Cardiac septum (tissue), 1 donor: ENCODE measurements at regions of chr11 and their contacts with region 1.

Region 1: GRCh38 chr11:17063171-17064002 is 14.1 kb downstream of the RPS13 start:
- DNase-seq: no peak

Region 2: DNA sequence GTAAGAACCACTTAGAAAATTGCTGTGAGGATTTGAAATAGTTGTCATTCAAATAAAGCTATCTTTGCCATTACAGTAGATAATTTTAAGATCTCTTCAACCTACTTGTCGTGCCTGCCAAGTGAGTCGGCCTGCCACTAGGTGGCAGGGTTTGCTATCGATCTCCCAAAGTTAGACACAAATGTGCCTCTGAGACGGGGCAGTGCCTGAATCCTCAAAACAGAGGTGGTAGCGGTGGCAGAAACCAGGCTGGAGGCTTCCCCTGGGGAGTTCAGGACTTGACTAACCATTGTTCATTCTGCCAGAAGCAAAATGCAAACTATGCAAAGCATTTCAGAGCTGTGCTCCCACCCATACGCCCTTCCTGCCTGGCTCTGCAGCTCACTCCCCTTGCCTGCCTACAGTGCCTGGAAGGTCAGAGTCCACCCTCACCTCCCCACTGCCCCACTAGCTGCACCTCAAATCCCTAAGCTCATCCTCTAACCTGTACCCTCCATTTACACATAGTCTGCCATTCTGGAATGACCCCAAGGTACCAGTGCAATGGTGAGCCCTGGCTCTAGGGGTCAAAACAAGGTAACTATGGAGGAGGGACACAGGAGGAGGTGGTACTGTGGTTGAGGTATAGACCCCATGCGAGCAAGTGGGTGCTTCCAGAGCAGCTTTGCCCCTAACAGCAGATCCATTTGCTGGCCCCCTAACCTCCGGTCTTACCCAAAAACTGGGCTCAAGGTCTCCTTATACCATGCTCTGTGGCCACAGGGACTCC is 242.9 kb before region 1 on chr11:
- intact Hi-C with region 1: loop called (anchors 10 kb)
- DNase-seq: peak; percentile 88

Region 3: GRCh38 chr11:16891964-16892363 is 171.4 kb before region 1 on chr11:
- intact Hi-C with region 1: no loop called
- DNase-seq: no peak

Region 4: GRCh38 chr11:16945671-16946469 is 117.5 kb before region 1 on chr11:
- intact Hi-C with region 1: loop called (anchors 1 kb)
- DNase-seq: no peak

Region 5: GRCh38 chr11:17014838-17015626 is 48.4 kb before region 1 on chr11:
- intact Hi-C with region 1: loop called (anchors 5 kb)
- DNase-seq: no peak